Psoas muscle (tissue), 8 donors: ENCODE measurements at regions of chr11 and their contacts with region 1.

Region 1: DNA sequence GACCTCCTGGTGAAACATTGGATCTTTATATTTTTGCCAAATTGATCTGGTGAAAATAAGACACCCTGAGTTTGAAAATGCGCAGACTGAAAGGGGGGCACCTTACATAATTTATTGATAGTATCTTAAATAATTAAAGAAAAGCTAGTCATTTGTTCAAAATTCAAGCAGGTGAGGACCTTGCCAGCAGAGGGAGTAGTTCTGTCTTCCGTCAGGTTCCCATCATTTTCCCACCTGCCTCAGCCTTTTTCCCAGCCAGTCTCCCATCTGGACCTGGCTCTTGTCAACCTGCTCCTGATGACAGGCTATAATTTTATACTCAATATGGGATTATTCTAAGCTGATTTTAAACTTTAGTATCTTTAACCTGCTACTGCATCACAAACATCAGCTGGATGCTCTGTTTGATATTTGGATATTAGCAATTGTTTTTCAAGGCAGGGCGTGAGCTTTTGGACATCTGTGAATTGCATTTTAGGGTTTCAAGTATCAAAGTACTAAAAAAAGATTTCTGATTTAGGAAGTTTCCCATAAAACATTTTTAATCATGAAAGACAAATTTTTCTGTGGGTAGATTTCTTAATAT is 132.0 kb downstream of the ELP4 start:
- DNase-seq: no peak
- ATAC-seq: no peak
- H3K4me3 ChIP-seq: no peak overlapping the region
- H3K27ac ChIP-seq: no peak overlapping the region
- H3K4me1 ChIP-seq: peaks cover 23% of the 10 kb centered on the region
- H3K27me3 ChIP-seq: no peaks in the 10 kb centered on the region
- CTCF ChIP-seq: peak; percentile 51

Region 2: DNA sequence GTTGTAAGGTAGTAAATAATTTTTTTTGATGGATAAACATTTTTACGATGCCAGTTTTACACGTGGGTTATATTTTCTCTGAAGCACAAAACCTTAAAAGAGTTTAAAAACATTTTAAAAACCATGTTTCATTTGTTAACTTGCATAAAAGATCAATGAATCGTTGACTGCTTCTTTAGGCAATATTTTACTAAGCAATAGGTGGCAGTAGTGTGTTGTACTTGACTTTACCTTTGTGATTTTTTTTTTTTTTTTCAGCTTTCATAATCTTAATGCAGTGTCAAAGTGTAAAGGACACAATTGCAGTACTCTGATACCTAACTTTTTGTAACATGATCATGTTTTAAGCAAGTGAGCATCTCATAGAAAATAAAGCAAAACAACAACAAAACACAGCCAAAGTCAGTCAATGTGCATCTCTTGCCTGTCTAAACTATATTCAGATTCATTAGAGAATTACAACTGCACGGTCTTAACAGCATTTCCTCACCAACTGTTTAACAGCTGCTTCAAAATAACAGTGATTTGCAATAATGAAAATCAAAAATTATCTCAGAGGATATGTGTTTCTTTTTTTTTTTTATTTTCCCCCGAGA is 244.2 kb before region 1 on chr11:
- intact Hi-C with region 1: loop called (anchors 5 to 10 kb)
- DNase-seq: no peak
- ATAC-seq: no peak
- H3K4me3 ChIP-seq: no peak overlapping the region
- H3K27ac ChIP-seq: no peak overlapping the region
- H3K4me1 ChIP-seq: no peaks in the 10 kb centered on the region
- H3K27me3 ChIP-seq: no peaks in the 10 kb centered on the region
- CTCF ChIP-seq: peak; percentile 53

Region 3: GRCh38 chr11:31404614-31405013 is 237.0 kb before region 1 on chr11:
- intact Hi-C with region 1: loop called (anchors 5 to 10 kb)
- DNase-seq: no peak
- ATAC-seq: no peak
- H3K4me3 ChIP-seq: no peak overlapping the region
- H3K27ac ChIP-seq: no peak overlapping the region
- H3K4me1 ChIP-seq: no peaks in the 10 kb centered on the region
- H3K27me3 ChIP-seq: no peaks in the 10 kb centered on the region
- CTCF ChIP-seq: no peak

Region 4: DNA sequence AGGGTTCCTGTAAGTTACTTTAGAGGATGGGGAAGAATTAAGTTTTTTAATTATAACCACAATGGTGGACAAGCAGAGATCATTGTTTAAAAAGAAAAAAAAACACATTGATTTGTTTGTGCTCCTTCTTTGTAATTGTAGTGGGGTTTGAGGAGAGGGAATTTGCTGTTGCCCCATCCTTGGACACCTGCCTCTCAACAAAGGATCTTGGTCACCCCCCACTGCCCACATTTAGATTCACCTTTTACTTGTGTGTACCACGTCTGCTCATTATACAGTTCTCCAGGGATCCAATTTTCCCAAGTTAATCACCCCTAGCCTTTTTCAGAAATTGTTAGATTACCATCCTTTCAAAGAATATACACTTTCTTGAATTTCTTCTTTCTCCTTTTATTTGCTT is 218.9 kb before region 1 on chr11:
- intact Hi-C with region 1: no loop called
- DNase-seq: no peak
- ATAC-seq: no peak
- H3K4me3 ChIP-seq: no peak overlapping the region
- H3K27ac ChIP-seq: no peak overlapping the region
- H3K4me1 ChIP-seq: no peaks in the 10 kb centered on the region
- H3K27me3 ChIP-seq: no peaks in the 10 kb centered on the region
- CTCF ChIP-seq: no peak

Region 5: GRCh38 chr11:31582697-31583096 is 58.9 kb before region 1 on chr11:
- intact Hi-C with region 1: no loop called
- DNase-seq: no peak
- ATAC-seq: no peak
- H3K4me3 ChIP-seq: no peak overlapping the region
- H3K27ac ChIP-seq: no peak overlapping the region
- H3K4me1 ChIP-seq: no peaks in the 10 kb centered on the region
- H3K27me3 ChIP-seq: no peaks in the 10 kb centered on the region
- CTCF ChIP-seq: no peak

Region 6: GRCh38 chr11:31779374-31779791 is 137.8 kb after region 1 on chr11:
- intact Hi-C with region 1: loop called in 1 of 2 experiments (anchors 10 kb)
- DNase-seq: no peak
- ATAC-seq: peak; percentile 90 to 98 (median 95)
- H3K4me3 ChIP-seq: no peak overlapping the region
- H3K27ac ChIP-seq: peak overlapping the region; percentile 71
- H3K4me1 ChIP-seq: peaks cover 11% of the 10 kb centered on the region
- H3K27me3 ChIP-seq: no peaks in the 10 kb centered on the region
- CTCF ChIP-seq: no peak

Region 7: DNA sequence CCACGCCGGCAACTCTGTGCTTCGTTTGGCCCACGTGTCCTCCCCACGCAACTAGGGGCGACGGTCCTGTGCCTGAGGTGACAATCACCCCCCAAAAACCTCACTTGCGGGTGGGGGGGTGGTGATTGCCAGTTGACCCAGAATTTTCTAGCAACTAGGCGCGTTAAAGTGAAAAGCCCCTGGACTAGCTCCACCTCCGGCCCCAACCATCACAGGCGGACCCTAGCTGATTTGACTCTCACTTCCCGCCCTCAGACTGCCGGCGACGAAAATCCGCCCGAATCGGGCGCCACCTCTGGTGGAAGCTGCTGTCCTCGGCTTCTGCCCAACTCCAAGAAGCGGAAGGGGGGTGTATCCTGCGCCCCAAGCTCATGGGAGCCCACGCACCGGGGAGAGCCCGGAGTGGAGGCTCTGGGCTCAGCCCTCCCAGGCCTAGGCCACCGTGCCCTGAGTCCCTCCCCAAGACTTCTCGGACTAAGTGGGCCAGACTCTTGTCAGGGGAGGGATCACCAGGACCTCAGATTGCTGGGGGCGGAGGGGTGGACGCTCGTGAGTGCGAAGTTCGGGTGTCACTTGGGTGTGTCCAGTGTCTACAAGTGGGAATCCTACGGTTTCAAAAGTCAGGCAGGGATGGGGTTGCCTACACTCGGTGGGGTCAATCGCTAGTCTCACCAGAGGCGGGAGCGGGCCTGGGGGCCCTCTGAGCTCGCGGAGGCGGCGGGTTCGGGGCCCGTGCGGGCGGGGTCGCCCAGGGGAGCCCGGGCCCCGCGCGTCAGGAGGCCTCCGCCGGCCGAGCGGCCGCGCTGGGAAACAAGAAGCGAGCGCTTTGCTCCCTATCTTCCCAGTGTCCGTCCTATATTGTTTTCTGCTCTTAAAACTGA is 157.2 kb after region 1 on chr11:
- intact Hi-C with region 1: loop called (anchors 10 kb)
- DNase-seq: peak in 1 of 2 donors; percentile 54
- ATAC-seq: peak in 3 of 4 donors; percentile 21 to 58 (median 52)
- H3K4me3 ChIP-seq: peak overlapping the region; percentile 54
- H3K27ac ChIP-seq: no peak overlapping the region
- H3K4me1 ChIP-seq: peaks cover 19% of the 10 kb centered on the region
- H3K27me3 ChIP-seq: peaks cover 0 to 83% (median 52%) of the 10 kb centered on the region in 3 donors
- CTCF ChIP-seq: no peak

Region 8: DNA sequence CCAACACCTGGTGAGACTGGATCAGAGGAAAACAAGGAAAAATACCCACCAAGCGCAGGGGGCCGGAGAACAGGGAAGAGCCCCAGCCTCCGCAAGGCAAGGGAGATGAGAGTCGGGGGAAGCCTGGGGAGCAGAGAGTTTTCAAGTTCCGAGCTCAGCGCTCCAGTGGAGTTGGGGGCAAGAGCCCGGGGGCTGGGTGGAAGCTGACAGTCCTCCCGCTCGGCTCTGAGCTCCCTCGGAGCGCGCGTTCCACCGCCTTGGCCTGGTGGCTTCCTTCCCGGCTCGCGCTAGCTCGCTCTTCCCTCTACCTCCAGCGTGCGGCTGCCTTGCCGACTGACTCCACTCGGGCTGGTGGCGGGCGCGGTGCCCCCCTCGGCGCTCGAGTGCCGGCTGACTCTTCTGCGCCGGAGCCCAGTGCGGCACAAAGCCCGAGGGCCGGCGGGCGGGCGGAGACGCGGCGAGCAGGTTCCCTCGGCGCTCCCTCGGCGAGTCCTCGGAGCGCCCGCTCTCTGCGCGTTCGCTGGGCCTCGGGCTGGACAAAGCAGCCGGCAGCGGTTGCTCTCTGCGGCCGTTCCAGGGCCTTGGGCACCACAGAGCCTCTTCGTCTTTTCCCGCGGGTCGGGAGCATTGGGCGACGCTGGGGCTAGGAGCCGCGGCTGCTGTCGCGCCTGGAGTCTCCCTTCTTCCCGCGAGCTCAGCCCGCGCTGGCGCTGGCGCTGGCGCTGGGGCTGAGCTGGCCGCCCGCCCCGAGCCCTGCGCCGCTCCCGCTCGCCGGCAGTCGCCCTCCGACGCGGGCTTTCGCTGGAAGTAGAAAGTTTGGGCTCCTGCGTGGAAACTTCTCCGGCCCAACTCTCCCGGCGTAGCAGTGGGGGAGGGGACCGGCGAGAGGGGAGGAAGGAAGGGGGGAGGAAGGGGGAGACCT is 168.5 kb after region 1 on chr11:
- intact Hi-C with region 1: loop called in 1 of 2 experiments (anchors 10 kb)
- DNase-seq: peak in 1 of 2 donors; percentile 60
- ATAC-seq: peak; percentile 31 to 64 (median 50)
- H3K4me3 ChIP-seq: peak overlapping the region; percentile 65
- H3K27ac ChIP-seq: no peak overlapping the region
- H3K4me1 ChIP-seq: peaks cover 48% of the 10 kb centered on the region
- H3K27me3 ChIP-seq: peaks cover 0 to 98% (median 72%) of the 10 kb centered on the region in 3 donors
- CTCF ChIP-seq: no peak

Region 9: GRCh38 chr11:31870609-31871309 is 229.2 kb after region 1 on chr11:
- intact Hi-C with region 1: loop called in 1 of 2 experiments (anchors 5 kb)
- DNase-seq: peak; percentile 19 to 53
- ATAC-seq: peak; percentile 53 to 89 (median 67)
- H3K4me3 ChIP-seq: peak overlapping the region; percentile 36
- H3K27ac ChIP-seq: no peak overlapping the region
- H3K4me1 ChIP-seq: no peaks in the 10 kb centered on the region
- H3K27me3 ChIP-seq: peaks cover 3 to 25% (median 4%) of the 10 kb centered on the region in 3 donors
- CTCF ChIP-seq: peak; percentile 67

Region 10: DNA sequence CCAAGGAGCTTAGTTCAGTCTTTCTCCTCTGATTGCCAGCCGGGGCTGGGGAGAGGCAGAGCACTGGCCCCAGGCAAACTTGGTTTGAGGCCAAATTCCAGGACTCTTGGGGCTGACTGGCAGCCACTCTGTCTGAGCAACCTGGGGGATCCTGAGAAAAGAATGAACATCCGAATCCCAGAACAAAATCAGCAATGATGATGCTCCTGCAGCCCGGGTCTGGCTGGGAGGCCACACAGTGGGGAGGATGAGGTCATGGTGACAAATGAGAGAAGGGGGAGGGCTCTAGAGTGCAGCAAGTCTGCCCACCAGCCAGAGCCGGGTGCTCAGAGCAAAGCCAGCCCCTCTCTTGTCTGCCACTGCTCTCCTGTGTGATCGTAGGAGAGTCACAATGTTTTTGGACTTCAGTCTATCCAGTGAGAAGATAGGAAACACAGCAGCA is 241.4 kb after region 1 on chr11:
- intact Hi-C with region 1: no loop called
- DNase-seq: no peak
- ATAC-seq: no peak
- H3K4me3 ChIP-seq: no peak overlapping the region
- H3K27ac ChIP-seq: no peak overlapping the region
- H3K4me1 ChIP-seq: no peaks in the 10 kb centered on the region
- H3K27me3 ChIP-seq: peaks cover 0 to 26% (median 4%) of the 10 kb centered on the region in 3 donors
- CTCF ChIP-seq: no peak

Region 11: DNA sequence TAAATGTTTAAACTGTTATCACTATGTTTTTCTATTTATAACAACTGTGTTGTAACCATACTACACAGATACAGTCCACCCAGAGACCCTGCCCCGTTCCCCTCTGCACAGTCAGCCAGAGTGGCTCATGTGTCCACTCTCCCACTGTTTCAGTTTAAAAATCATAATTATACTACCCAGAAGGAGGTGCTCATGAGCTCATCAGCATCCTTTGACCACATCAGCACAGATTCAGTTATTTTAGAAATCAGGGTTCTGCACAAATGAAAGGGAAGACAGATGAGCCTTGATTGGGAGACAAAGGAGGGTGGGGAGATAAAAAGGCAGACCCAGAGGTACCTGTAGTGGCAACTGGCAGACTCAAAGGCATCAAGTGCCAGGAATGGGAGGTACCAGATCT is 573.6 kb after region 1 on chr11:
- intact Hi-C with region 1: no loop called
- DNase-seq: no peak
- ATAC-seq: no peak
- H3K4me3 ChIP-seq: no peak overlapping the region
- H3K27ac ChIP-seq: no peak overlapping the region
- H3K4me1 ChIP-seq: no peaks in the 10 kb centered on the region
- H3K27me3 ChIP-seq: peaks cover 0 to 2% (median 0%) of the 10 kb centered on the region in 3 donors
- CTCF ChIP-seq: no peak